B cell (primary cell): ENCODE measurements at regions of chrX and their contacts with region 1.

Region 1: DNA sequence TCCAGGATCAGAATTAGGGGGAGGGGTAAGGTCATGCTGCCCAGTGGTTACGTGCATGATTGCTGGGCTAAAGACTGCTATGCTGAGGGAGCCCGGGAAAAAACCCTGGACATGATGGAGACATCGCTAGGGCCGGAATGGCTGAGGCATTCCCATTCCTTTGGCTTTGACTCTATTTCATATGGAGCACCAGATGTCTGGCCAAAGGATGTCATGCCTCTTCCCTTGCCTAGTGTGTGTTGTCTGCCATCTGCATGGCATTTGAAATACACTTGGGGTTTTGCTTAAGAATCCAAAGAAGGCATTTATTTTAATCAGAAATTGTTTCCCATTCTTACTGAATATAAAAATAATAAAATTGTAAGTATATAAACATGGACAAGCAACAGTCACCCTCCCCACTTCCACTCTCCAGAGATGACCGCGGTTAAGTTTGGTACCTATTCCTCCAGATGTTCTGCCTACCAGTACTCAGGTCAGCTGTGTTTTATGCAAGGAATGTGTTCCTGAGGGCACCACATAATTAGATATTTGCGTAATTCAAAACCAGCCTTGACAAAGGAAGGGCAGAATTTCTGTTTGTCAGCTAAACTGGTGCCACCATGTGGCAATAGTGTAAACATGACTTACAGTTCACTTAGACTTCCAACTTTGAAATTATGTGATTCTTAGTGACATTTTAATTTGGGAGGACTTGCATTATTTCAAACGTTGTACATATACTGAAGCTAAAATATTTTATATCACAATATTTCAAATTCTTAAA is 105.9 kb downstream of the CT47B1 start:
- DNase-seq: peak; percentile 51
- ATAC-seq: no peak
- H3K4me3 ChIP-seq: no peak overlapping the region
- H3K4me3 Mint-ChIP-seq: peak overlapping the region; percentile 45
- H3K27ac ChIP-seq: no peak overlapping the region
- H3K27ac Mint-ChIP-seq: peak overlapping the region; percentile 70
- H3K4me1 ChIP-seq: peaks cover 0 to 7% of the 10 kb centered on the region in 2 donors
- H3K4me1 Mint-ChIP-seq: peaks cover 6% of the 10 kb centered on the region
- H3K27me3 ChIP-seq: no peaks in the 10 kb centered on the region
- H3K27me3 Mint-ChIP-seq: no peaks in the 10 kb centered on the region
- CTCF ChIP-seq: peak; percentile 50

Region 2: DNA sequence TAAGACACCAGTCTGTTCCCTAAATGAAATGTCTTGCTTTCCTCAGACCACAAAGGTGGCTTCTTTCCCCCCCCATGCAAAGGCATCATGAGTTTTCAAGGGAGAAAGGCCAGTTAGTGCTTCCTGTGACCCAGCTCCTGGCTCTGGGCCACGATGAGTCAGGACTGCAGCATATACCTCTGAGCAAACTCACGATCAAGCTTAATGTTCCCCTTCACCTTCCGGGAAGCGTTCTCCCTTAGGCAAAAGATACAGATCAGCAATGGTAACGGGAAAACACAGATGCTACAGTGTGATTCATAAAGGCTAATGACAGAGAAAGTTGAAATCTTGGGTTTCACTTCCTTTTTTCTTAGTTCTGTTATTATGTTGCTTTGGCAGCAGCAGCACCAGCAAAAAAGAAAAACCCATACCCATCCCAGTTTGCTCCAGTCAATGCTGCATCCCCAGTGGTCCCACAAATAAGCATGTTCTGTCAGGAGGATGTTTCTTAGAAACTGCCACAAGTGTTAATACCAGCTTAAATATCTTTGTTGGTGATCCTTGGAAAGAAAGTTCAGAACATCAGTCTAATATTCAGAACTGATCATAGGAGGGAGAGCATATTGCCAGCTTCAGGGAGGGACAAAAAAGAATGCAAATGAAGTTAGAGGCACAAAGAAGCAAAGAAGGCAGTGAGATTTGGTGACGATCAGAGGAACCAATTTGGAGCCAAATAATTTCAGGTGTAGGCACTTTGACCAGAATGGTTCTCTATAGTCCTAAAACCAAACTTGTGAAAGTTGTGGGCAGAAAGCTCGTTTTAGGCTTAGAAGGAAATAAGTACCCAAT is 1754.1 kb before region 1 on chrX:
- CTCF ChIA-PET with region 1: no interaction called
- POLR2A ChIA-PET with region 1: no interaction called
- intact Hi-C with region 1: no loop called
- DNase-seq: peak; percentile 76
- ATAC-seq: peak; percentile 79
- H3K4me3 ChIP-seq: peak overlapping the region in 1 of 5 experiments; percentile 31
- H3K4me3 Mint-ChIP-seq: peak overlapping the region; percentile 32
- H3K27ac ChIP-seq: peak overlapping the region; percentile 66 to 72
- H3K27ac Mint-ChIP-seq: peak overlapping the region; percentile 95
- H3K4me1 ChIP-seq: peaks cover 16 to 21% of the 10 kb centered on the region in 2 donors
- H3K4me1 Mint-ChIP-seq: peaks cover 24% of the 10 kb centered on the region
- H3K27me3 ChIP-seq: no peaks in the 10 kb centered on the region
- H3K27me3 Mint-ChIP-seq: no peaks in the 10 kb centered on the region
- CTCF ChIP-seq: no peak

Region 3: GRCh38 chrX:120428309-120428708 is 341.4 kb before region 1 on chrX:
- CTCF ChIA-PET with region 1: no interaction called
- POLR2A ChIA-PET with region 1: no interaction called
- intact Hi-C with region 1: no loop called
- DNase-seq: no peak
- ATAC-seq: no peak
- H3K4me3 ChIP-seq: no peak overlapping the region
- H3K4me3 Mint-ChIP-seq: no peak overlapping the region
- H3K27ac ChIP-seq: no peak overlapping the region
- H3K27ac Mint-ChIP-seq: no peak overlapping the region
- H3K4me1 ChIP-seq: peaks cover 0 to 8% of the 10 kb centered on the region in 2 donors
- H3K4me1 Mint-ChIP-seq: peaks cover 30% of the 10 kb centered on the region
- H3K27me3 ChIP-seq: no peaks in the 10 kb centered on the region
- H3K27me3 Mint-ChIP-seq: no peaks in the 10 kb centered on the region
- CTCF ChIP-seq: no peak

Region 4: DNA sequence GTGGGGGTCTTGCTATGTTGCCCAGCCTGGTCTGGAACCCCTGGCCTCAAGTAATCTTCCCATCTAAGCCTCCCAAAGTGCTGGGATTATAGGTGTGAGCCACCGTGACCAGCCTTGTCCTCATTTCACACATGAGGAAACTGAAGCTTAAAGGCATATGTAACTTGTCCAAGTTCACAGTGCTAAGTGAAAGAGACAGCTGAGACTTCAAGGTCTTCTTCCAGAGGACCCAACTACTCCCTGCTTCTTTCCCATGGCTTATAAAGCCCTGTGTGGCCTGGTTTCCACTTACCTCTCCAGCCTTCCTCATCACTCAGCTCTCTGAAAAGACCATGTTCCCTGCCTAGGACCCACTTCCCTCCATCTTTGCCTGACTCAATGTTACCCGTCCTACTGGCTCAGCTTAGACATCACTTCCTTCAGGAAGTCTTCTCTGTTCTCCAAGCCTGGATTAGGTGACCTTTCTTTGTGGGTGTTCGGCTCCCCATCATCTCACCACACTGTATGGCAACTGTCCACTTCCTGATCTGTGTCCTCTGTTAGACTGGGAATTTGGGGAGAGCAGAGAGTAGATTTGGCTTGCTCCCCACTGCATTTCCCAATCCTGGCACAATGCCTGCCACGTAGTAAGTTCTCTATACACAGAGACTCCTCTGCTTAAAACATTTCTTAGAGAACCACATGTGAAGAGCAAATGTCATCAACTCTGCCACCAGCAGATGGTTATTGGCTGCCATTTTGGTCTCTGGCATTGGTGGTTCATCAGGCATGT is 270.3 kb before region 1 on chrX:
- CTCF ChIA-PET with region 1: interaction called, 15 read pairs
- POLR2A ChIA-PET with region 1: no interaction called
- intact Hi-C with region 1: loop called (anchors 1 kb)
- DNase-seq: no peak
- ATAC-seq: no peak
- H3K4me3 ChIP-seq: no peak overlapping the region
- H3K4me3 Mint-ChIP-seq: no peak overlapping the region
- H3K27ac ChIP-seq: no peak overlapping the region
- H3K27ac Mint-ChIP-seq: no peak overlapping the region
- H3K4me1 ChIP-seq: no peaks in the 10 kb centered on the region
- H3K4me1 Mint-ChIP-seq: peaks cover 5% of the 10 kb centered on the region
- H3K27me3 ChIP-seq: no peaks in the 10 kb centered on the region
- H3K27me3 Mint-ChIP-seq: no peaks in the 10 kb centered on the region
- CTCF ChIP-seq: no peak

Region 5: DNA sequence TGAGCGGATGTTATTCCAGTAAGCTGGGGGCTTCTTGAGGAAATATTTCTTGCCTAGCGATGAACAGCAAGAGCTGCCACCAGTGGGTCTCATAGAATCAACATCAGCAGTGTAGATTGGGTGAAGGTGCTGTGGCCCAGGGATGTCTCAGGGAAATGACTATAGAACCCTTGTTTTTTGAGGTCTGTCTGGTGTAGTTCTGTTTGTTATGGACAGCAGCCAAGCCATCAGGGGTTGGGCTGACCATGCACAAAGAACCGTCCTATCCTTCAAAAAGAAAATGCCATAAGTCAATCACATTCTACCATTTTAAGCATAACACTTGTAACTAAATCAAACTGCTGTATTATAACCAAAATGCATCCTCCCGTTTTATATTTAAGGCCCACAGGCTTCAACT is 122.6 kb before region 1 on chrX:
- CTCF ChIA-PET with region 1: interaction called, 3 read pairs
- POLR2A ChIA-PET with region 1: no interaction called
- intact Hi-C with region 1: loop called (anchors 5 kb)
- DNase-seq: no peak
- ATAC-seq: no peak
- H3K4me3 ChIP-seq: no peak overlapping the region
- H3K4me3 Mint-ChIP-seq: no peak overlapping the region
- H3K27ac ChIP-seq: no peak overlapping the region
- H3K27ac Mint-ChIP-seq: no peak overlapping the region
- H3K4me1 ChIP-seq: peaks cover 9 to 10% of the 10 kb centered on the region in 2 donors
- H3K4me1 Mint-ChIP-seq: peaks cover 17% of the 10 kb centered on the region
- H3K27me3 ChIP-seq: no peaks in the 10 kb centered on the region
- H3K27me3 Mint-ChIP-seq: no peaks in the 10 kb centered on the region
- CTCF ChIP-seq: no peak

Region 6: GRCh38 chrX:120664081-120664480 is 105.7 kb before region 1 on chrX:
- CTCF ChIA-PET with region 1: interaction called, 20 read pairs
- POLR2A ChIA-PET with region 1: no interaction called
- intact Hi-C with region 1: loop called (anchors 5 kb)
- DNase-seq: peak; percentile 38
- ATAC-seq: no peak
- H3K4me3 ChIP-seq: no peak overlapping the region
- H3K4me3 Mint-ChIP-seq: no peak overlapping the region
- H3K27ac ChIP-seq: no peak overlapping the region
- H3K27ac Mint-ChIP-seq: peak overlapping the region; percentile 12
- H3K4me1 ChIP-seq: no peaks in the 10 kb centered on the region
- H3K4me1 Mint-ChIP-seq: peaks cover 4% of the 10 kb centered on the region
- H3K27me3 ChIP-seq: no peaks in the 10 kb centered on the region
- H3K27me3 Mint-ChIP-seq: no peaks in the 10 kb centered on the region
- CTCF ChIP-seq: peak; percentile 52

Region 7: DNA sequence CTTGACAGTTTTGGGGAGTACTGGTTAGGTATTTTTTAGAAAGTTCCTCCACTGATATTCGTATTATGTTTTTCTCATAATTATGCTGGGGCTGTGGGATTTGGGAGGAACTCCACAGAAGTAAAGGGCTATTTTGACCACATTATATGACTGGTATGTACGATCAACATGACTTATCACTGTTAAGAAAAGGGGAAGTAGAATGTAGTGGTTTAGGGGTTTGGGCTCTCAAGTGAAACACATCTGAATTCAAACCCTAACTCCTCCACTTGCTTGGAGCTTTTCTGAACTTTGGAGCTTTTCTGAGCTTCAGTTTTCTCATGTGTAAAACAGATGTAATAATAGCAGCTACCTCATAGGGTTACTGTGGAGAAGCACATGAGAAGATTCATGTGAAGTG is 43.5 kb before region 1 on chrX:
- CTCF ChIA-PET with region 1: interaction called, 9 read pairs
- POLR2A ChIA-PET with region 1: no interaction called
- intact Hi-C with region 1: loop called (anchors 5 kb)
- DNase-seq: peak; percentile 71
- ATAC-seq: peak; percentile 95
- H3K4me3 ChIP-seq: no peak overlapping the region
- H3K4me3 Mint-ChIP-seq: peak overlapping the region; percentile 46
- H3K27ac ChIP-seq: peak overlapping the region; percentile 43 to 55
- H3K27ac Mint-ChIP-seq: peak overlapping the region; percentile 59
- H3K4me1 ChIP-seq: peaks cover 22 to 23% of the 10 kb centered on the region in 2 donors
- H3K4me1 Mint-ChIP-seq: peaks cover 27% of the 10 kb centered on the region
- H3K27me3 ChIP-seq: no peaks in the 10 kb centered on the region
- H3K27me3 Mint-ChIP-seq: no peaks in the 10 kb centered on the region
- CTCF ChIP-seq: no peak

Region 8: DNA sequence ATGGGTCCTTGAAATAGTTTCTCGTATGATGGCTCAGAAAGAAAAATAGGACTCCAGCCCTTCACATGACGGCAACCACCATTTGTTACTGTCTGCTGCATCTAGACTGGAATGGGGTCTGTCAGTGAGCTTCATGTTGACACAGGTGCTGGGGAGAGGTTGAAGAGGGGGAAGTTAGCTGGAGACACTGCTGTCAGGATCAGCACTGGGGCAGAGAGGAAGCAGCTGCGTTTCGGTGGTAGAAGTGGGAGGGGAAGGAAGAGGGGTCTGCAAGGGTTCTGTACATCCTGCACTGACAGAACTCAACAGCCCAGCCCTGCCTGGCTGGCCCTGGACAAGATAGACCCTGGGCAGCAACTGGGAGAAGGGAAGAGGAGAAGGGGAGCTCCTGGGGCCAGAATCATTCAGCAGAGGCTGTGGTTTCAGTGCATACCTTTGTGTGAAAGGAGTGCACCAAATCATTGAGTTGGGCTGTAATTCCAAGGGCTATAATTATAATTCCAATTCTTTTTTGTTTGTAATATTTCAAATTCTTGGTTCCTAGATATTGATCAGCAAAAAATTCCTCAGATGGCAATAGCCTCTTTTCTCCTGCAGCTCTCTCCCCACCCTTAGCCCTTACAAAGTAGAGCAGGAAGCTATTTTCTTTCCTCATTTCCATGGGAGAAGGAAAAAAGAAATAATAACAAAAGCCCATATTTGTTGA is 20.5 kb before region 1 on chrX:
- CTCF ChIA-PET with region 1: interaction called, 19 read pairs
- POLR2A ChIA-PET with region 1: no interaction called
- intact Hi-C with region 1: no loop called
- DNase-seq: peak; percentile 69
- ATAC-seq: peak; percentile 72
- H3K4me3 ChIP-seq: peak overlapping the region in 2 of 5 experiments; percentile 8 to 21
- H3K4me3 Mint-ChIP-seq: peak overlapping the region; percentile 74
- H3K27ac ChIP-seq: peak overlapping the region; percentile 79 to 80
- H3K27ac Mint-ChIP-seq: peak overlapping the region; percentile 90
- H3K4me1 ChIP-seq: peaks cover 64 to 78% of the 10 kb centered on the region in 2 donors
- H3K4me1 Mint-ChIP-seq: peaks cover 83% of the 10 kb centered on the region
- H3K27me3 ChIP-seq: no peaks in the 10 kb centered on the region
- H3K27me3 Mint-ChIP-seq: no peaks in the 10 kb centered on the region
- CTCF ChIP-seq: no peak

Region 9: GRCh38 chrX:120801426-120801825 is 31.7 kb after region 1 on chrX:
- CTCF ChIA-PET with region 1: no interaction called
- POLR2A ChIA-PET with region 1: no interaction called
- intact Hi-C with region 1: no loop called
- DNase-seq: no peak
- ATAC-seq: no peak
- H3K4me3 ChIP-seq: no peak overlapping the region
- H3K4me3 Mint-ChIP-seq: no peak overlapping the region
- H3K27ac ChIP-seq: no peak overlapping the region
- H3K27ac Mint-ChIP-seq: no peak overlapping the region
- H3K4me1 ChIP-seq: no peaks in the 10 kb centered on the region
- H3K4me1 Mint-ChIP-seq: no peaks in the 10 kb centered on the region
- H3K27me3 ChIP-seq: peaks cover 0 to 4% (median 0%) of the 10 kb centered on the region in 4 experiments
- H3K27me3 Mint-ChIP-seq: no peaks in the 10 kb centered on the region
- CTCF ChIP-seq: no peak

Region 10: DNA sequence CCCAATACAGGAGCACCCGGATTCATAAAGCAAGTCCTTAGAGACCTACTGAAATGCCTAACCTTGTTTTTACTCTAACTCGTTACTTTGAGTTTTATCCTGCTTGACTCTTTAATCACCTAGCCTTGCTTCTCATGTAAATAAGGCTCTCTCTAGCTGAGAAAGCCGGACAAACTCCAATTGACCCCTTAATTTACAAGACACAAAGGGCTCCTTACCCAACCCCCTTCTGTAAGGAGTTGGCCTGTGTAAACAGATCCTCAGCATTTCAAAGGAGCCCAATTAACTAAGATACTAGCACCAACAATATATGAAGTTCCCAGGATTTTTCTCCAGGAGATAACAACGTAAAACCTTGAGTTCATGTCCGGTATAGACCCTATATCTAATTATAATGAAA is 44.2 kb after region 1 on chrX:
- CTCF ChIA-PET with region 1: no interaction called
- POLR2A ChIA-PET with region 1: no interaction called
- intact Hi-C with region 1: no loop called
- DNase-seq: no peak
- ATAC-seq: no peak
- H3K4me3 ChIP-seq: no peak overlapping the region
- H3K4me3 Mint-ChIP-seq: no peak overlapping the region
- H3K27ac ChIP-seq: no peak overlapping the region
- H3K27ac Mint-ChIP-seq: no peak overlapping the region
- H3K4me1 ChIP-seq: no peaks in the 10 kb centered on the region
- H3K4me1 Mint-ChIP-seq: no peaks in the 10 kb centered on the region
- H3K27me3 ChIP-seq: no peaks in the 10 kb centered on the region
- H3K27me3 Mint-ChIP-seq: peaks cover 17% of the 10 kb centered on the region
- CTCF ChIP-seq: no peak